ENCODE measurements at regions of chr1 and their contacts with region 1.

Region 1: DNA sequence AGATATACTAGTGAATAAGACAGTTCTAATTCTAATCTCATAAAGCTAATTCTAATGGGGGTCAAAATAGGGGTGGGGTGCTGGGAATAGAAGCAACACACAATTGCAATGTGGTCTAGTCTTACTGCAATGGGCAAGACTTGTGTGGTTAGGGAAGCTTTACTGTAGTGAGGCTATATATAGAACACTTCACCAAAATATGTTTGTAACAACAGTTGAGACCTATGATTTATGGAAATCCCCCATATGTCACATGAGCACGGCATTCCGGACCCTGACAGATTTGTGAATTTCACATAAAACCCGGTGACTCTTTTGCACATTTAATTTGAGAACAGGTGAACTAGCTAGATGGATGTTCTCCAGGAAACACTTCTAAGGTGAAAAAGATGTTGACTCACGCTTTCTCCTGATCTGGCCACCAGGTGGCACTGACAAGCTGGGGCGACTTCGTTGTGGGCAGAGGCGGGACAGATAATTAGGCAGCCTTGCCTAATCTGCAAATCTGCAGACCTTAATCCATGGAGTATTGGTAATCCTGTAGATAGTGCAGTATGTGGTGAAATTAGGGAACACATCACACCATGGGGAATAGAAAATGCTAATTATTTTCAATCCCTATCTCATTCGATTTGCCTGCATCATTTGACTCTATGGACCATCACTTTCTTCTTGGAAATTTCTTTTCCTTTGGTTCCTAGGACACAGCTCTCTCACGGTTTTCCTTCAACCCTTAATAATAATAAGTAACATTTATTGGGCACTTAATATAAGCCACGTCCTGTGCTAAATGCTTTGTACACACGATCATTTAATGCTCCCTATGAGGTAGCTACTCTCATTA is 37.7 kb downstream of the KIAA0040 start:
- H3K4me3 ChIP-seq: no peak overlapping the region
- H3K27ac ChIP-seq: no peak overlapping the region
- H3K4me1 ChIP-seq: no peaks in the 10 kb centered on the region
- CTCF ChIP-seq: peak; percentile 56

Region 2: GRCh38 chr1:174713796-174714195 is 441.1 kb before region 1 on chr1:
- CTCF ChIA-PET with region 1: no interaction called
- POLR2A ChIA-PET with region 1: no interaction called
- H3K4me3 ChIP-seq: no peak overlapping the region
- H3K27ac ChIP-seq: no peak overlapping the region
- H3K4me1 ChIP-seq: no peaks in the 10 kb centered on the region
- CTCF ChIP-seq: no peak

Region 3: DNA sequence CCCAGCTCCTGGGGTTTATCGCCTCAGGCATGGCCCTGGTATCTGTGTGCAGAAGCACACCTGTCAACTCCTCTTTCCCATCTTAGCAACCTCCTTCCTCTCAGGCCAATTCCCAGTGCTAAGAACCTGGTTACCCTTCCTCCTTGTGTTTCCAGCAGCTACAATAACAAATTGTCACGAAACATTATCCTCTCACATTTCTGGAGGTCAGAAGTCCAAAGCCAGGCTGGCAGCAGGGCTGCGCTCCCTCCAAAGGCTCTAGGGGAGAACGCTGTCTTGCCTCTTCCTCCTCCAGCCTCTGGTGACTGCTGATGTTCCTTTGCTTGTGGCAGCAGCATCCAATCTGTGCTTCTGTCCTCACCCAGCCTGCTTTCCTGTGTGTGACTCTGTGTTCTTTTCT is 120.9 kb before region 1 on chr1:
- CTCF ChIA-PET with region 1: interaction called, 24 read pairs
- POLR2A ChIA-PET with region 1: no interaction called
- H3K4me3 ChIP-seq: no peak overlapping the region
- H3K27ac ChIP-seq: no peak overlapping the region
- H3K4me1 ChIP-seq: no peaks in the 10 kb centered on the region
- CTCF ChIP-seq: no peak

Region 4: GRCh38 chr1:175183586-175183985 is 28.7 kb after region 1 on chr1:
- CTCF ChIA-PET with region 1: interaction called, 12 read pairs
- POLR2A ChIA-PET with region 1: no interaction called
- H3K4me3 ChIP-seq: no peak overlapping the region
- H3K27ac ChIP-seq: no peak overlapping the region
- H3K4me1 ChIP-seq: no peaks in the 10 kb centered on the region
- CTCF ChIP-seq: no peak

Region 5: GRCh38 chr1:175221666-175222175 is 66.9 kb after region 1 on chr1:
- CTCF ChIA-PET with region 1: interaction called, 29 read pairs
- POLR2A ChIA-PET with region 1: no interaction called
- H3K4me3 ChIP-seq: no peak overlapping the region
- H3K27ac ChIP-seq: no peak overlapping the region
- H3K4me1 ChIP-seq: peaks cover 19% of the 10 kb centered on the region
- CTCF ChIP-seq: peak; percentile 17; the same call in 1 of the 2 replicates

Region 6: DNA sequence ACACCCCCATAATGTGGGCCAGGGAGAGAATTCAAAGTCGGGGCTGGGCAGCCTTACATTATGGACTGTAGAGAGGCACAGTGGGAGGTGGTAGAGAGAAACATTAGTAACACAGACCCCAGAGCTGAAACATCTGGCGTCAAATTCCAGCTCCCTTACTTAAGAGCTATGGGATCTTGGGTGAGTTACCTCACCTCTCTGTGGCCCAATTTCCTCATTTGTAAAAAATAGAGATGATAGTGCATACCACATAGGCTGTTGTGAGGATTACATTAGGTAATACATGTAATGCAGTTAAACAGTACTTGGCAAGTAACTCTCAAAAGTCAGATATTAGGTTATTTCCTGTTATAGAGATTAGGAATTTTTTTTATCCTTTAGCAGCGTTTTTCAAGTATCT is 198.2 kb after region 1 on chr1:
- CTCF ChIA-PET with region 1: interaction called, 14 read pairs
- POLR2A ChIA-PET with region 1: no interaction called
- H3K4me3 ChIP-seq: no peak overlapping the region
- H3K27ac ChIP-seq: no peak overlapping the region
- H3K4me1 ChIP-seq: no peaks in the 10 kb centered on the region
- CTCF ChIP-seq: no peak

Region 7: DNA sequence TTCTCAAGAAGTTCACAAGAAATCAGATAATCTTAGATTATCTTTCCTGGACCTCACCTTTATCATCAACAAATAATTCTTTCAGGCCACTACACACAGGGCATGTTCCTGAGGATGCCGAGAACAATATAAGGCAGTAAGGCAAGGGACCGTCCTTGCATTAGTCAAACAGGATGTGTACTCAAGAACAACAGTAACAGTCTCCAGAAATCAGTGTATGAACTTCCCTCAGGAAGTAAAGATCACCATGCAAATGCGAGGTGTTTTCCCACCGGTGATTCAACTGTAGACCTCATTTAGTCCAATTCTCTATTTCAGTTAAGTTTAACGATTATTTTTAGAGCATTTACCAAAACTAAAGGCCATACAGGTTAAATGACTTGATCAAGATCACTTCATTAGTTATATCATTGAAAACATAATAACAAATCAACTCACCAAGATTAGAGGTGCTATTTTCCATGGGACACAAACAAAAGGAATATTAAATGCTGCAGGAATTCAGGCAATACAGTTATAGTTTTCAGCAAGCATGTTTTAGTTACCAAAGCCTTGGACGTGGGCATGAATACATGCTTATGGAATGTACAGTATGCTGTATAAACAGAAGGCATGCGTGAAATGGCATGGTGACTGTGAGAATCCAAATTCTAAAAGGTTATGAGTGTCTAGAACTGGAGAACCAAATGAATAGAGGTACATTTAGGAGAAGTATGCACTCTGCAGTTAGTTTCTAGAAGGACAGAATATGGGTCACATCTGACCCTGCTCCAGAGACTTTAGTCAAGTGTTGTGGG is 443.3 kb after region 1 on chr1:
- CTCF ChIA-PET with region 1: no interaction called
- POLR2A ChIA-PET with region 1: no interaction called
- H3K4me3 ChIP-seq: no peak overlapping the region
- H3K27ac ChIP-seq: no peak overlapping the region
- H3K4me1 ChIP-seq: no peaks in the 10 kb centered on the region
- CTCF ChIP-seq: no peak